Heart left ventricle (tissue), 16 donors: ENCODE measurements at regions of chr2 and their contacts with region 1.

Region 1: GRCh38 chr2:205545971-205546816 is 136.1 kb upstream of the NRP2 start:
- DNase-seq: no peak
- ATAC-seq: peak in 1 of 4 donors; percentile 49
- H3K4me3 ChIP-seq: no peak overlapping the region
- H3K27ac ChIP-seq: peak overlapping the region in 1 of 12 donors; percentile 78
- H3K4me1 ChIP-seq: peaks cover 0 to 23% (median 0%) of the 10 kb centered on the region in 12 donors
- H3K27me3 ChIP-seq: no peaks in the 10 kb centered on the region
- CTCF ChIP-seq: no peak
- POLR2A ChIP-seq: no peak

Region 2: GRCh38 chr2:205864491-205864890 is 318.3 kb after region 1 on chr2:
- intact Hi-C with region 1: loop called in 1 of 10 experiments (anchors 5 kb)
- DNase-seq: no peak
- ATAC-seq: no peak
- H3K4me3 ChIP-seq: no peak overlapping the region
- H3K27ac ChIP-seq: no peak overlapping the region
- H3K4me1 ChIP-seq: peaks cover 0 to 9% (median under 1%) of the 10 kb centered on the region in 12 donors
- H3K27me3 ChIP-seq: no peaks in the 10 kb centered on the region
- CTCF ChIP-seq: no peak
- POLR2A ChIP-seq: no peak

Region 3: GRCh38 chr2:206193671-206194382 is 647.6 kb after region 1 on chr2:
- intact Hi-C with region 1: no loop called
- DNase-seq: no peak
- ATAC-seq: peak in 1 of 4 donors; percentile 28
- H3K4me3 ChIP-seq: no peak overlapping the region
- H3K27ac ChIP-seq: peak overlapping the region in 2 of 12 donors; percentile 1 to 46
- H3K4me1 ChIP-seq: peaks cover 0 to 5% (median 0%) of the 10 kb centered on the region in 12 donors
- H3K27me3 ChIP-seq: no peaks in the 10 kb centered on the region
- CTCF ChIP-seq: no peak
- POLR2A ChIP-seq: no peak